Esophagus muscularis mucosa (tissue), 4 donors: ENCODE measurements at regions of chr5 and their contacts with region 1.

Region 1: DNA sequence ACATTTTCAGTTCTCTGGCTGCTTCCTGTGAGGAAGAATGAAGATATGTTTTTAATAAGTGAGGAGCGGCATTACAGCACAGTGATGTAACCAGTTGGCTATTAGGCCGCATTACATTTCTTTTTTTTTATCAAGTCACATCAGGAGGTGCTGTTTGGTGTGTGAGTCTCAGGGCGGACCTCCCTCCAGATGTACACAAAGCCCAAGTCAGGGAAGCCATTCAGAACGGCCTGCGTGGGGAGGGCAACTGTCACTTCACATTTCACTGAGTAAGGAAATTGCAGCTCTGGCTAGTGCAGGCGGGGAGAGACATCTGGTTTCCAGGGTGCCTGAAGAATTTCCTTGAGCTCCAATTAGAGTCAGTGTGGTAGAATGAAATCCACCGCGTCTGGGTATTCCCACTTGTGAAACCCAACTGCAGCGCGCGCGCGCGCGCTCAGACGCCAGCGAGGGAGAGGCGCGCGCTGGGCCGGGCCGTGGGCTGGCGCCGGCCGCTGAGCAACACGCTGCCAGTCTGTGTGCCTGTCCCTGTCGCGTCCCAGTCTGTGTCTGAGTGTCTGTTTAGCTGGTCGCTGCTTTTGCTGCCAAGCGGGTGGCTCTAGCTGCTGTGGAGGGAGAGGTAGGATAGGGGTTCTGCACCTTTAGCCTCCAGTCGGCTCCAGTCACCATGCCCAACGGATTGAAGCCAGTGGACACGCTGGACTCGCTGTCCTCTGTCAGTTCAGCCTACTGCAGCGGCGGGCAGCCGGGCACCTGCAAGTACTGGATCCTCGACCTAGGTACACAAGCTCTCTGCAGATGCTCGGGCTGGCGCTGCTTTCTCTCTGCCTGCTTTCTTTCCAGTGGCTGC is 140.8 kb upstream of the OTULINL start:
- DNase-seq: no peak
- H3K4me3 ChIP-seq: peak overlapping the region; percentile 54 to 66 (median 56)
- H3K27ac ChIP-seq: peak overlapping the region; percentile 81 to 88 (median 85)
- H3K4me1 ChIP-seq: peaks cover 29 to 55% (median 52%) of the 10 kb centered on the region in 4 donors
- H3K27me3 ChIP-seq: no peaks in the 10 kb centered on the region
- CTCF ChIP-seq: no peak
- EP300 ChIP-seq: no peak
- POLR2A ChIP-seq: no peak

Region 2: GRCh38 chr5:14405267-14405666 is 35.5 kb before region 1 on chr5:
- intact Hi-C with region 1: loop called (anchors 5 kb)
- DNase-seq: no peak
- H3K4me3 ChIP-seq: no peak overlapping the region
- H3K27ac ChIP-seq: peak overlapping the region in 3 of 4 donors; percentile 11 to 81 (median 79)
- H3K4me1 ChIP-seq: peaks cover 20 to 44% (median 39%) of the 10 kb centered on the region in 4 donors
- H3K27me3 ChIP-seq: no peaks in the 10 kb centered on the region
- CTCF ChIP-seq: no peak
- EP300 ChIP-seq: no peak
- POLR2A ChIP-seq: no peak

Region 3: DNA sequence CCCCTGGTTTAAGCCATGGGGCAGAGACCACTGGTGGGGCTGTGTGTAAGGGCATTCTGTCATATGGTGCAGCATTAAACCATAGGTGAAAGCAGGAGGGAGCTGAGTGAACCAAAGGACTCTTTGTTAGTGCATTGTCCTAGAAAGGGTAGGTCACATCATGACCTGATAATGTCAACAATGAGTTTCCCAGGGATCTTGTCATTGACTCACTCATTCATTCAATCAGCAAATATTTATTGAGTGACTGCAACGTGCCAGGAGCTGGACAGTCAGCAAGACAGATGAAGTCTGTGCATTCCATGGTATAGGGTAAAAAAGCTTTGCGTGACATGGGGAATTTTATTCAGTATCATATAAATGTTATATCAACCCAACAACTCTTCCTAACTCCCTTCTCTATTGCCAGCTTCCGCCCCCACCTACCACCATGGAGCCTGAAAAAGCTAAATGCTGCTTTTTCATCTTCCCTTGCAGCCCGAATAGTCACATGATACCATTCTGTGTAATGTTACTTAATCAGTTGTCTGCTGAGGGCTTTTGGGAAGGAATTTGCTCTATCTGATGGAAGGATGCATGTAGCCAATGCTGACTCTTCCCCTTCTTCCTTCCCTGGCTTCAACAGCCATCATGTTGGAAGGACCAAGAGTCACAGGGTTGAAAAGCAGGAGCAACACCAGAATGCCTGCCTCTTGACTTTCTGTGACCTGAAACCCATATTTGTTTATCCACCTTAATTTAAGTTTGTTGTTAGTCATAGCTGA is 129.3 kb after region 1 on chr5:
- intact Hi-C with region 1: no loop called
- DNase-seq: no peak
- H3K4me3 ChIP-seq: no peak overlapping the region
- H3K27ac ChIP-seq: no peak overlapping the region
- H3K4me1 ChIP-seq: no peaks in the 10 kb centered on the region
- H3K27me3 ChIP-seq: no peaks in the 10 kb centered on the region
- CTCF ChIP-seq: no peak
- EP300 ChIP-seq: no peak
- POLR2A ChIP-seq: no peak